Activated CD4-positive, alpha-beta T cell treated with anti-CD3 and anti-CD28 coated beads for 36 hours (primary cell): ENCODE measurements at regions of chr1 and their contacts with region 1.

Region 1: DNA sequence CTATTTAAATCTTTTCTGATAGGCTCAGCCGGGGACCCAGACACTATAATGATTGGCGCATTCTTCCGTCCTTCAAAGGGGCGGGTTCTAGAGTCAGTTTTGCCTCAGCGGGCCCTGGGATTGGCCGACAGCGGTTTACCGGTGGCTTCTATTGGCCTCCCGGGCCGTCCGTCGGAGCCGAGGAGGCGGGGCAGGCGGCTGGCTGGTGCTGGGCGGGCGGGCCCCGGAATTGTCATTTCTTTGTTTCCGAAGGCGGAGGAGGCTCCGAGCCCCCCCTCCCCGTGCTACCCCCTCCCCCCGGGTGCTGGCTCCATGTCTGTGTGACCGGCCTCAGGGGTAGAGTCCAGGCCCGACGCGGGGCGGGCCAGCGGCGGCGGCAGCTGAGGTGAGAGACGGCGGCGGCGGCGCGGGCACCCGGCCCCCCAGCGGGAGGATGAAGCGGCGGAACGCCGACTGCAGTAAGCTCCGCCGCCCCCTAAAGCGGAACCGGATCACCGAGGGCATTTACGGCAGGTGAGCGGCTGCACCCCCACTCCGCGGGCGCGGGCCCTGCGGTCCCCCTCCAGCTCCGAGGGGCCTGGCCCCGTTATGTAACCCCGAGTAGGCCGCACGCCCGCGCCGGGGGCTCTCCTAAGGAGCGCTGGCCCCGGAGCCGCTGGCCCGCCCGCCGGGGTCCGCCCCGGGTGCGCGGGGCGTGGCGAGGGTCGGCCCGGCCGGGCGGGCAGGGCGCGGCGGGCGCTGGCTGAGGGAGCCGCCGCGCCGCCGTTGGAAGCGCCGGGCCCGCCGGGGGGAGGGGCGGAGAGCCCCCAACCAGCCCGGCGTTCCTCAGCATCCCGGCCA is at the start of gene MACO1:
- DNase-seq: peak; percentile 98
- ATAC-seq: peak; percentile 93
- H3K4me3 Mint-ChIP-seq: peak within 1 kb of the TSS; percentile 93
- H3K27ac Mint-ChIP-seq: peak within 1 kb of the TSS; percentile 99
- H3K4me1 Mint-ChIP-seq: peaks cover 47% of the 10 kb centered on the region
- H3K27me3 Mint-ChIP-seq: no peaks in the 10 kb centered on the region
- total RNA-seq, gene MACO1: 15.7 to 18.5 TPM

Region 2: DNA sequence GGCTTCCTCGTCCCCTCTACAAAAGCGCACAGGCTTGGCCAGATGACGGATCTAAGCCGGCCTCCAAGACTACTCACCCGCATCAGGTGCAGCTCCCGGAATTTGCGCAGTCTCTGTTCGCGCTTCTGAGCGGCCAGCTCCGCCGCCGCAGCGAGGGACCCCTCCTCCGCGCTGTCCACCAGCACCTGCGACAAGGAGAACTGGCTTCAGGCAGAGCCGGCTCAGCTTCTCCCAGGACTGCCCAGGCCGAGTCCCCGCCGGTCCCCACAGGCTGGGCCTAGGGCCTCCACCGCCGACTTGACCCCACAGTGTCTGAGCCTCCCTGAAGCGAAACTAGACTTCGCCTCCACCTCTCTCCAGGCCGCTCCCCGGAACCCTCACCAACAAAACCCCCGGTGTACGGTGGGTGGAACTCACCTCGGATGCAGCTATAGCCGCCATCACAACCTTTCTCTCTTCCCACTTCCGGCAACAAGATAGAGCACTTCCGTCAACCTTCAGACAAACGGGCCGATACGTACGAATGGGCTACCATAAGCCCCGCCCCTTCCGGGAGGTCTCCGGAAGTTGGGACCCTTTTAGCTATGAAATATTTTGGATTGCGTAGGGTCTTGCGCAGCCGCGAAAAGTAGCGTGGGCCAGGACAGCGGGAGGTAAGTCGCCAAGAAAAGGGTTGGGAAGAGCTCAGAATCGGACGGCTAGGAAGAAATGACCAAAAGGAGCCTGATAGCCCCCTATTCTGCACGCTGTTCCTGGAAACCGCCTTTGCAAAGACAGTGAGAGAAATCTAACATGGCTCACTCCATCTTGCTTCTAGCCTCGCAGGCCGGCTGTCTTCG is 198.6 kb before region 1 on chr1 and contains the start of gene SYF2:
- CTCF ChIA-PET with region 1: no interaction called
- POLR2A ChIA-PET with region 1: interaction called, 4 read pairs
- intact Hi-C with region 1: loop called in 1 of 2 experiments (anchors 1 kb)
- DNase-seq: peak; percentile 92
- ATAC-seq: peak; percentile 92
- H3K4me3 Mint-ChIP-seq: no peak within 1 kb of the TSS
- H3K27ac Mint-ChIP-seq: no peak within 1 kb of the TSS
- H3K4me1 Mint-ChIP-seq: peaks cover 26% of the 10 kb centered on the region
- H3K27me3 Mint-ChIP-seq: no peaks in the 10 kb centered on the region
- total RNA-seq, gene SYF2: 39.0 to 42.4 TPM

Region 3: GRCh38 chr1:25338188-25338981 is 92.5 kb before region 1 on chr1 and contains the start of gene TMEM50A:
- CTCF ChIA-PET with region 1: no interaction called
- POLR2A ChIA-PET with region 1: no interaction called
- intact Hi-C with region 1: loop called in 1 of 2 experiments (anchors 2 kb)
- DNase-seq: peak; percentile 93
- ATAC-seq: peak; percentile 76
- H3K4me3 Mint-ChIP-seq: peak within 1 kb of the TSS; percentile 94
- H3K27ac Mint-ChIP-seq: peak within 1 kb of the TSS; percentile 93
- H3K4me1 Mint-ChIP-seq: peaks cover 31% of the 10 kb centered on the region
- H3K27me3 Mint-ChIP-seq: no peaks in the 10 kb centered on the region
- total RNA-seq, gene TMEM50A: 98.0 to 120 TPM

Region 4: GRCh38 chr1:25360596-25361581 is 70.0 kb before region 1 on chr1:
- CTCF ChIA-PET with region 1: no interaction called
- POLR2A ChIA-PET with region 1: no interaction called
- intact Hi-C with region 1: no loop called
- DNase-seq: no peak
- ATAC-seq: no peak
- H3K4me3 Mint-ChIP-seq: no peak overlapping the region
- H3K27ac Mint-ChIP-seq: peak overlapping the region; percentile 33
- H3K4me1 Mint-ChIP-seq: peaks cover 16% of the 10 kb centered on the region
- H3K27me3 Mint-ChIP-seq: no peaks in the 10 kb centered on the region

Region 5: GRCh38 chr1:25487628-25488027 is 56.7 kb after region 1 on chr1:
- CTCF ChIA-PET with region 1: interaction called, 14 read pairs
- POLR2A ChIA-PET with region 1: no interaction called
- intact Hi-C with region 1: no loop called
- DNase-seq: peak; percentile 54
- ATAC-seq: no peak
- H3K4me3 Mint-ChIP-seq: no peak overlapping the region
- H3K27ac Mint-ChIP-seq: no peak overlapping the region
- H3K4me1 Mint-ChIP-seq: peaks cover 7% of the 10 kb centered on the region
- H3K27me3 Mint-ChIP-seq: no peaks in the 10 kb centered on the region

Region 6: DNA sequence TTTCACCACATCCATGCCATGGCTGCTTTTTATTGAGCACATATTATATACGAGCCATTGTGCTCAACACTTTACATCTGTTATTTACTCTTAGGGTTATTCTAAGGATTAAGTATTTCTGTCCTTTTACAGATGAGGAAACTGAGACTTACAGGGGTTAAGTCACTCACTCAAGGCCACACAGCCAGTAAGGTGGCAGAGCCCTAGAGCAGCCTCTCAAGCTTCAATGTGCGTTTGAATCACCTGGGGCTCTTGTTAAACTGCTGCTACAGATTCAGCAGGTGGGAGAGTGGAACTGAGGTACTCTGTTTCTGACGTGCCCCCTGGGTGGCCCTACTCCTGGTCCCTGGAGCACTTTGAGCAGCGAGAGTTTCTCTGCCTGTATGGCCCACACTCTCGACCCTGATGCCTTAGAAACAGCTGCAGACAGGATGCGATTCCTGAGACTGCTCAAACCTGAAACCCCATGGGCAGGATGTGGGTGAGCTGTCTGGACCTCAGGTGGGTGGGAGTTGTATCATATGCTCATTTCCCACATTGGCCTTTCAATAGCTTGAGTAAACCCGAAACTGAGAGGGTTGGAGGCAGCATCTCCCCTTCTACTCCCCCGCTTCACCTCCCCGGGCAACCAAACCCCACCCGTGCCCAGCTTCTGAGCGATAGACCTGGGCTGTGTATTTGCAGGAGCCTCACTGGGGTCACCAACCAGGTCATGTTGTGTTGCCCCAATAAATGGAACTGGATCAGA is 245.0 kb after region 1 on chr1:
- CTCF ChIA-PET with region 1: no interaction called
- POLR2A ChIA-PET with region 1: no interaction called
- intact Hi-C with region 1: loop called in 1 of 2 experiments (anchors 5 kb)
- DNase-seq: peak; percentile 94
- ATAC-seq: peak; percentile 85
- H3K4me3 Mint-ChIP-seq: peak overlapping the region; percentile 50
- H3K27ac Mint-ChIP-seq: peak overlapping the region; percentile 78
- H3K4me1 Mint-ChIP-seq: peaks cover 89% of the 10 kb centered on the region
- H3K27me3 Mint-ChIP-seq: peaks cover 2% of the 10 kb centered on the region

Region 7: DNA sequence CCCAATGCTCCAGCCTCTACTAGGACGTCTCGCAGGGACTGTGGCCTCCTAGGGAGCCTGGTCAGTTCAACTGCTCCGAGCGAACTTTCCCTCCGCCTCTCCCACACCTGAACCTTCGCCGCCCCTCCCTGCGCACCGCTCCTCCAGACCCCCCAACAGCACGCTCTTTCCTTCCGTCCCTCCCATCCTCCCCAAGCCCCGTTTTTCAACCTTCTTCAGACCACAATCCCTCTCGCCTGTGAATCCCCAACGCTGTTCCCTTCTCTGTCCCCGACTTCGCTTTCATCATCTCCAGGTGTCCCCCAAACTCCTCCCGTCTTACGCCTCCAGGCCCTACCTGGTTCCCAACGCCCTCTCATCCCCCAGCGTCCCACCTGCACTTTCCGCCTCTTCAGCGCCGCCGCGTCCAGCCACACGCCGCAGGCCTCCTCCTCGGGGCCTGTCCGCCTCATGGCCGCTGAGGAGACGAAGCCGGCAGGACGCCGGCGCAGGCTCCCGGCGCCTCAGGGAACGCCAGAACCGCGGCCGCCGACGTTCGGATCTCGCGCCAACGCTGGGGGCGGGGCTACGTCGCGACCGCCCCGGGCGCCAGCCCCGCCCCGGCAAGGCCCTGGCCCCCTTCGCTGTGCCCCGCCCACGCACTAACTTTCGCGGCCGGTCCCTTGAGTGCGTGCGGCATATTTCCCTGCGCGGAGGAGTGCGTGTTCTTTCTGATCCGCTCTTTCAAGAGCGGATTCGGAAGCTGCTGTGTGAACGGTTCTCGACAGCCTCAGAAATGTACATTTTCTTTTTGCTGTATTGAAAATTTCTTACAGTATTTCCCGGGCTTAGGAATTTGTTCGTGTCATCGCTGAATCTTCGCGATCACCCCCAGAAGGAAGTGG is 428.3 kb after region 1 on chr1 and contains the start of gene AUNIP:
- CTCF ChIA-PET with region 1: no interaction called
- POLR2A ChIA-PET with region 1: no interaction called
- intact Hi-C with region 1: loop called in 1 of 2 experiments (anchors 1 kb)
- DNase-seq: peak; percentile 97
- ATAC-seq: peak; percentile 95
- H3K4me3 Mint-ChIP-seq: peak within 1 kb of the TSS; percentile 94
- H3K27ac Mint-ChIP-seq: peak within 1 kb of the TSS; percentile 93
- H3K4me1 Mint-ChIP-seq: peaks cover 13% of the 10 kb centered on the region
- H3K27me3 Mint-ChIP-seq: no peaks in the 10 kb centered on the region
- total RNA-seq, gene AUNIP: 9.6 to 12.9 TPM

Region 8: GRCh38 chr1:26126321-26127084 is 695.6 kb after region 1 on chr1:
- CTCF ChIA-PET with region 1: no interaction called
- POLR2A ChIA-PET with region 1: no interaction called
- intact Hi-C with region 1: loop called in 1 of 2 experiments (anchors 5 kb)
- DNase-seq: peak; percentile 52
- ATAC-seq: peak; percentile 88
- H3K4me3 Mint-ChIP-seq: peak overlapping the region; percentile 58
- H3K27ac Mint-ChIP-seq: peak overlapping the region; percentile 86
- H3K4me1 Mint-ChIP-seq: peaks cover 51% of the 10 kb centered on the region
- H3K27me3 Mint-ChIP-seq: no peaks in the 10 kb centered on the region